PC-3 (cell line): ENCODE measurements at regions of chr6 and their contacts with region 1.

Region 1: GRCh38 chr6:168035098-168035660 is 37.7 kb downstream of the KIF25 start:
- DNase-seq: peak; percentile 48
- ATAC-seq: peak; percentile 50
- H3K4me3 ChIP-seq: peak overlapping the region; percentile 68
- H3K27ac ChIP-seq: peak overlapping the region; percentile 50
- H3K4me1 ChIP-seq: peaks cover 11% of the 10 kb centered on the region; the same call in 1 of the 2 replicates
- H3K27me3 ChIP-seq: no peaks in the 10 kb centered on the region
- CTCF ChIP-seq: no peak

Region 2: GRCh38 chr6:167951781-167952511 is 83.2 kb before region 1 on chr6:
- CTCF ChIA-PET with region 1: no interaction called
- POLR2A ChIA-PET with region 1: no interaction called
- intact Hi-C with region 1: loop called (anchors 5 kb)
- DNase-seq: no peak
- ATAC-seq: no peak
- H3K4me3 ChIP-seq: no peak overlapping the region
- H3K27ac ChIP-seq: no peak overlapping the region
- H3K4me1 ChIP-seq: peaks cover 10% of the 10 kb centered on the region
- H3K27me3 ChIP-seq: no peaks in the 10 kb centered on the region
- CTCF ChIP-seq: no peak

Region 3: GRCh38 chr6:168099201-168100010 is 64.2 kb after region 1 on chr6:
- CTCF ChIA-PET with region 1: no interaction called
- POLR2A ChIA-PET with region 1: no interaction called
- intact Hi-C with region 1: no loop called
- DNase-seq: no peak
- ATAC-seq: no peak
- H3K4me3 ChIP-seq: no peak overlapping the region
- H3K27ac ChIP-seq: no peak overlapping the region
- H3K4me1 ChIP-seq: no peaks in the 10 kb centered on the region
- H3K27me3 ChIP-seq: peaks cover 5% of the 10 kb centered on the region
- CTCF ChIP-seq: no peak